Right cardiac atrium (tissue), 5 donors: ENCODE measurements at regions of chr6 and their contacts with region 1.

Region 1: DNA sequence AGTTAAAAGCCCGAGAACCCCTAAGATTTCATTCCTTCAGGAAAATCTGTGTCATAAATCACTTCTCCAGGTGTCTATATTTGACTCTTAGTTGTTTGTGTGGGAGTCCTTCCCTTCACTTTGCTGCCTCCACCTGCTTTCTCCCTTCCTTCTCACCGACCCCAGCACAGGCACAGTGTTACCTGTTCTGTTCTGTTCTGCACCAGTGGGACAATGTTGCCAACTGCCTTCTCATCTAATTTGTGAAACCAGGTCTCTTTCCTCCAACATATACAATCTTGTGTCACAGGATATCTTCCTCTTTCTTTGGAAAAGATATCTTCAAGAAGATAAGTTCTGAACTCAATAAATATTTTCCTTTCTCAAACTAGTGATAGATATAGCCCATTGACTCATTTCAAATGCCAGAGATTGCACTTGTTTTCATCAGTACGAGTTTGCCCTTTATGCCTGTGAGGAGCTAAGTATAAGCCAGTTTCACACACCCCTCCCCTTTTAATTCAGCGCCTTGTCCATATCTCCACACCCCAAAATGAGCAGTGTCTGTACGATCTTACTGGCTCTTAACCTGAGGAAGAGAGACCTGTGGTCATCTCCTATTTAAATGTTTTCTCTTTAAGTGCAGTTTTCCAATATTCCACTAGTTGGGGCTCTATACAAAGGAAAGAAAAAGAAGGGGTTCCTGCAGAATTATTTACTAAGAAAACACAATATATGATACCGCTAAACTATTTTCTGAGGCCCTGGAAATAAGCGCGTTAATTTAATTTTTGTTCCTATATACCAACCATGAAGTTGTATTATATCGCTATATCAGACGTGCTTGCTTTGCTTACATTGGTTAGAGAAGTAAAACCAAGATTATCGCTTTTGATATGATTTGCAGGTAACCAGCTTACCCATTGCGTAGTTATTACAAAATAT is 81.6 kb upstream of the PREP start:
- DNase-seq: no peak
- ATAC-seq: peak in 1 of 2 donors; percentile 19
- H3K4me3 ChIP-seq: no peak overlapping the region
- H3K27ac ChIP-seq: no peak overlapping the region
- H3K4me1 ChIP-seq: peaks cover under 1% of the 10 kb centered on the region
- H3K27me3 ChIP-seq: no peaks in the 10 kb centered on the region

Region 2: GRCh38 chr6:105545947-105546731 is 61.6 kb after region 1 on chr6:
- intact Hi-C with region 1: no loop called
- DNase-seq: no peak
- ATAC-seq: no peak
- H3K4me3 ChIP-seq: no peak overlapping the region
- H3K27ac ChIP-seq: no peak overlapping the region
- H3K4me1 ChIP-seq: no peaks in the 10 kb centered on the region
- H3K27me3 ChIP-seq: no peaks in the 10 kb centered on the region

Region 3: DNA sequence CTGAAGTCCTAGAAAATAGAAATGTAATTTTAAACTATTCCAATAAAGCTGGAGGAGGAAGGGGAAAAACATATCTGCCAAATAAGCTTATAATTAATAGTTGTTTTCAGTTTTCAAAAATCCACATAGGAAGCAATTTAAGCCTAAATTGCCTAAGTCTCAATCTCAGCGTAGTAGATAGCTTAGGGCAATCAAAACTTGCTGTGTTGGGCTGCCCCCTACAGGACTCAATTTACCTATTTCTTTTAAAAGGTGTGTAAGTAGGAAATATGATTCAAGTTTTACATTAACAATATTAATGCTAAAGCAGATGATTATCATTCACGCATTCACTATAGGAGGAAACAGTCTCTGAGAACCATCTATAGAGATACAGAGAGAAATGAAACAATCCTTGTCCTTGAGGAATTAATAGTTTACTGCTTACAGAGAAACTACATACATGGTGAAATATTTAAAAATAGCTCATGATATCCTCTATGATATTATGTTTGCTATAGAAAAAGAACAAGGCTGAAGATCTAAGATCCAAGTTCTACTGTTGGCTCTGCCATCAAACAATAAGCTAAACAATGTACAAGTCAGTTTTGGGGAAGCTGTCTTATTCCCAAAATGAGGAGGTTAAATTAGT is 738.9 kb after region 1 on chr6:
- intact Hi-C with region 1: loop called in 3 of 4 experiments (anchors 5 to 10 kb)
- DNase-seq: peak in 2 of 3 donors; percentile 27 to 63
- ATAC-seq: no peak
- H3K4me3 ChIP-seq: no peak overlapping the region
- H3K27ac ChIP-seq: no peak overlapping the region
- H3K4me1 ChIP-seq: no peaks in the 10 kb centered on the region
- H3K27me3 ChIP-seq: no peaks in the 10 kb centered on the region

Region 4: DNA sequence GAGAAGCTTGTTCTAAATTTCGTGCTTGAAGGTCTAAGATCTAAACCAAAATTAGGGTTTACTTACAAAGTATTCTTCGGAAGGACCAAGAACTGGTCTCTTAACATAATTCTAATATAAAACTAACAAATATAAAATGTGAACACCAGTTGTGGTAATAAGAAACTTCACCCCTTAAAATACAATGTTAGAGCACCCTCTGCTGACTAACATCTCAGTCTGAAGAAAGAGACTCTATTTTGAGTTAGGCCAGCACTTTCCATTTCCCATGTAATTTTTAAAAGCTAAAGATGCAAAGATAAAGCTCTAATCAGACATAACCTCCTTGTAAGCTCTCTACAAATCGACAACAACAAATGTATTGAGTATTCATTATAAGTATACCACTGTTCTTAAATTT is 816.4 kb after region 1 on chr6:
- intact Hi-C with region 1: loop called in 1 of 4 experiments (anchors 10 kb)
- DNase-seq: no peak
- ATAC-seq: no peak
- H3K4me3 ChIP-seq: no peak overlapping the region
- H3K27ac ChIP-seq: no peak overlapping the region
- H3K4me1 ChIP-seq: no peaks in the 10 kb centered on the region
- H3K27me3 ChIP-seq: no peaks in the 10 kb centered on the region